Heart left ventricle (tissue), 16 donors: ENCODE measurements at regions of chrX and their contacts with region 1.

Region 1: DNA sequence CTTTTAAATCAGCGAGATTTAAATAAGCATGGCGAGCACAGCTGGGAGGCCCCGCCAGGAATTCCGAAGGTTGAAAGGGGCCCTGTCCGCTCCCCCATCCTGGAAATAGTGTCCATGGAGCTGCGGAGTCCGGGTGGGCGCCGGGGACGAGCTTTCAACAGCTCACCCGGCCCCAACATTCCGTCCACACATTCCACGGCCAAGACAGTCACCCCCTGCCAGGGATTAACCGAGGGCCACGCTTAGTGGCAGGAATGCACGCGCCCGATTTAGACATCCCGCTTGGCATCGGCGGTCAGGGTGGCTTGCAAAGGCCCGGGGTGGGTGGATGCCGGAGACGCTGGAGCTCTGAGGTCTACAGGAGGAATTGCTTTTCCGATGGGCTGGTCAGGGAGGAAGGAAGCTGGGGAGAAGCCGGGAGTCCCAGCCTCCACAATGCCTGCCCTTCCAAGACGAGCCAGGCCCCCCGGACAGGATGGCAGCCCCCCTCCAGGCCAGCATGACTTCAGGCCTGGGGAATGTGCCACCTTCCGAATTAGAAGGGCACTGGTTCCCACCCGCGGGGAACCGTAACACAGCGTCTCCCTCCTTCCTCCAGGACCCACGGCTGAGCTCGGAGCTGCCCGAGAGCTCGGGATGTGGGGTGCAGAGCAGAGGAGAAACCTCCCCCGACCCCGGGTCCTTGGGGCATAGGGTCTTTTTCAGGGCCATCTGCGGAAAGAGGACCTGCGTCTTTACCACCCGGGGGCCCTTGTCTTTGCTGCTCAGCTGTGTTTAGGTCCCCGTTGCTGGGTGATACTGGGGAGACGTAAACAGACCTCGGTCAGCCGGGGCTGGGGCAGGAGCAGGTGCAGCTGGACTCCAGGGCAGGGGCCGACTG is 26.9 kb upstream of the PPP2R3B start:
- DNase-seq: peak; percentile 63 to 87 (median 73)
- ATAC-seq: peak; percentile 86 to 94 (median 91)
- H3K4me3 ChIP-seq: peak overlapping the region in 11 of 12 donors; percentile 15 to 52 (median 45)
- H3K27ac ChIP-seq: peak overlapping the region; percentile 32 to 93 (median 83)
- H3K4me1 ChIP-seq: peaks cover 0 to 16% (median 0%) of the 10 kb centered on the region in 12 donors
- H3K27me3 ChIP-seq: peaks cover 0 to 4% (median 0%) of the 10 kb centered on the region in 9 donors
- CTCF ChIP-seq: peak in 7 of 12 donors; percentile 11 to 48 (median 36)
- POLR2A ChIP-seq: no peak

Region 2: DNA sequence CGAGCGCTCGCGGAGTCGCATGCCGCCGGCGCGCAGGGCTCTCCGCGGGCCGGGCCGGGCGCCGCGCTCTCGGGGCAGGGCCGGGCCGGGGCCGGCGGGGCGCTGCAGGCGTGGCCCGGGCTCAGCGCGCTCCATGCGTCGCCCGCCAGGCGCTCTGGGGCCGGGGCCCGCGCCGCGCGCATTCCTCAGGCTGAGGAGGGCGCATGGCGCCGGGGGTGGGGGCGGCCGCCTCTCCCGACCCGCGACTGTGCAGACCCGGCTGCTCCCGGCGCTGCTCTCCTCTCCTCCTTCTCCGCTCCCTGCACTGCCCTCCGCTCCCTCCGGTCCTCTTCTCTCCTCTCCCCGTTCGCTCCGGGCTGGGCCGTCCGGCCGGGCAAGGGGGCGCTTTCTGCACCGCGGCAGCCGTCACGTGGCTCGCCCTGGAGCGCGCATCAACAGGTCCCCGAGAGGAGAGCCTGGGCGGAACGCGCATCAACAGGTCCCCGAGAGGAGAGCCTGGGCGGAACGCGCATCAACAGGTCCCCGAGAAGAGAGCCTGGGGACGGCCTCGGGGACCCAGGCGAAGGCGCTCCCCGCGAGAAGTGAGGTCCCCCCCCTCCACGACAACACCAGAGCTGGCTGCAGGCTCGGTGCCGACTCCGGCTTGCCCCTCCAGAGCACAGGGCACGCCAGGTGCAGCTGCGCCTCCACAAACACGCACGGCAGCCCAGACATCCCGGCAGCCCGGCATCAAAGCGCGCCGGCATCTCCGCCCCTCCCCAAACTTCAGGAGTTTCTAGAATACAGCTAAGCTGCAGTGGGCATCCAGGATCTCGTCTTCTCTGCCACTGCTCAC is 39.7 kb before region 1 on chrX:
- intact Hi-C with region 1: loop called in 1 of 10 experiments (anchors 5 kb)
- DNase-seq: peak in 3 of 5 donors; percentile 51 to 68 (median 64)
- ATAC-seq: peak in 3 of 4 donors; percentile 28 to 38 (median 37)
- H3K4me3 ChIP-seq: peak overlapping the region; percentile 38 to 66 (median 52)
- H3K27ac ChIP-seq: peak overlapping the region; percentile 31 to 94 (median 81)
- H3K4me1 ChIP-seq: peaks cover 0 to 50% (median 13%) of the 10 kb centered on the region in 12 donors
- H3K27me3 ChIP-seq: peaks cover 0 to 27% (median 3%) of the 10 kb centered on the region in 9 donors
- CTCF ChIP-seq: peak in 1 of 12 donors; percentile 4
- POLR2A ChIP-seq: no peak

Region 3: GRCh38 chrX:386768-387575 is 26.6 kb before region 1 on chrX and contains the start of gene PPP2R3B:
- intact Hi-C with region 1: loop called in 2 of 10 experiments (anchors 1 to 2 kb)
- DNase-seq: peak; percentile 99 to 100 (median 99)
- ATAC-seq: peak; percentile 100
- H3K4me3 ChIP-seq: peak within 1 kb of the TSS; percentile 38 to 97 (median 83)
- H3K27ac ChIP-seq: peak within 1 kb of the TSS; percentile 94 to 100 (median 98)
- H3K4me1 ChIP-seq: peaks cover 0 to 16% (median 9%) of the 10 kb centered on the region in 12 donors
- H3K27me3 ChIP-seq: no peaks in the 10 kb centered on the region
- CTCF ChIP-seq: no peak
- POLR2A ChIP-seq: peak in 1 of 2 donors; percentile 46
- total RNA-seq, gene PPP2R3B: 98.3 to 186 (median 113) TPM

Region 4: GRCh38 chrX:446245-446644 is 32.7 kb after region 1 on chrX:
- intact Hi-C with region 1: no loop called
- DNase-seq: peak in 1 of 5 donors; percentile 10
- ATAC-seq: no peak
- H3K4me3 ChIP-seq: no peak overlapping the region
- H3K27ac ChIP-seq: no peak overlapping the region
- H3K4me1 ChIP-seq: no peaks in the 10 kb centered on the region
- H3K27me3 ChIP-seq: peaks cover 0 to 14% (median 0%) of the 10 kb centered on the region in 9 donors
- CTCF ChIP-seq: no peak
- POLR2A ChIP-seq: no peak